ENCODE measurements at regions of chr1 and their contacts with region 1.

Region 1: DNA sequence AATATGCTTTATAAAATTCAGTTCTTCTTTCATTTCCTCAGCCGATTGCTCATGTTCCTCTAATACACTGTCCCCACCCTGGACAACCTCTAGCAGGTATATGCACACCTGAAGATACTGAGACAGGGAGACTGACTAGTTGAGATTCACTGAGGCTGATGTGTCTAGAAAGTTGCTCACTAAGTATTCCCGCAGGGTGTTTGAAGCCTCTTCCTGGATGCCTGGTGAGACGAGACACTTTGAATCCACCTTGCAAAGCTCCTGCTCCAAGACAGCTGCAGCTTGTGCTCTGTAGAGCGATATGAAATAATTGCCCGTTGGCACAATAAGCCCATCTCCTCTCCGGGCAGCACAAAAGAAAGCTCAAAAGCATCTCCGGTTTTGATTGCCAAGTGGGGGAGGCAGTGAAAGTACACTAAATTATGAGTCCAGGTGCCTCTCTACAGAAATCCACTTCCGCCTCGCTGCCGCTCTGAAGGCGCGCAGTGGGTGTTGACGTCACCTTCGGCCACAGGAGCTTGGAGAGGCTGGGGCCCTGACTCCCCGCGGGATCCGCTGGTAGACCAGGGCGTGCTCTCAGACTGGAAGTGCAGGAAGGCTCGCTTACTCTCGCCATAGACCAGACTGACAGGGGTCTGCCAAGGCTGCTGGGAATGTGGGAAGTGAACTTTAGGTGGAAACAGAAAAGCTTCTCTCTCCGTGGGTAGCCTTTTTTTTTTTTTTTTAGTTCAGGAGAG is 46.3 kb downstream of the GPA33 start:
- DNase-seq: peak; percentile 43 to 82
- ATAC-seq: peak; percentile 83 to 97 (median 95)
- H3K4me3 ChIP-seq: peak overlapping the region; percentile 31
- H3K4me3 Mint-ChIP-seq: peak overlapping the region; percentile 87
- H3K27ac ChIP-seq: no peak overlapping the region
- H3K27ac Mint-ChIP-seq: peak overlapping the region in 1 of 2 donors; percentile 83
- H3K4me1 ChIP-seq: peaks cover 5% of the 10 kb centered on the region
- H3K4me1 Mint-ChIP-seq: peaks cover 9 to 13% of the 10 kb centered on the region in 2 donors
- H3K27me3 ChIP-seq: no peaks in the 10 kb centered on the region
- H3K27me3 Mint-ChIP-seq: peaks cover 20 to 31% of the 10 kb centered on the region in 2 donors
- CTCF ChIP-seq: no peak

Region 2: GRCh38 chr1:166975361-166976129 is 68.4 kb before region 1 on chr1 and contains the start of gene ILDR2:
- intact Hi-C with region 1: loop called (anchors 5 kb)
- DNase-seq: peak; percentile 48 to 77
- ATAC-seq: peak; percentile 82 to 92 (median 91)
- H3K4me3 ChIP-seq: peak within 1 kb of the TSS; percentile 48
- H3K4me3 Mint-ChIP-seq: peak within 1 kb of the TSS; percentile 91
- H3K27ac ChIP-seq: peak within 1 kb of the TSS; percentile 41
- H3K27ac Mint-ChIP-seq: peak within 1 kb of the TSS; percentile 18 to 71
- H3K4me1 ChIP-seq: peaks cover 10% of the 10 kb centered on the region
- H3K4me1 Mint-ChIP-seq: peaks cover 19 to 30% of the 10 kb centered on the region in 2 donors
- H3K27me3 ChIP-seq: peaks cover 2% of the 10 kb centered on the region
- H3K27me3 Mint-ChIP-seq: peaks cover 13 to 19% of the 10 kb centered on the region in 2 donors
- CTCF ChIP-seq: no peak
- total RNA-seq, gene ILDR2: 2.4 to 4.3 (median 2.8) TPM